Caco-2 (cell line): ENCODE measurements at regions of chr13 and their contacts with region 1.

Region 1: DNA sequence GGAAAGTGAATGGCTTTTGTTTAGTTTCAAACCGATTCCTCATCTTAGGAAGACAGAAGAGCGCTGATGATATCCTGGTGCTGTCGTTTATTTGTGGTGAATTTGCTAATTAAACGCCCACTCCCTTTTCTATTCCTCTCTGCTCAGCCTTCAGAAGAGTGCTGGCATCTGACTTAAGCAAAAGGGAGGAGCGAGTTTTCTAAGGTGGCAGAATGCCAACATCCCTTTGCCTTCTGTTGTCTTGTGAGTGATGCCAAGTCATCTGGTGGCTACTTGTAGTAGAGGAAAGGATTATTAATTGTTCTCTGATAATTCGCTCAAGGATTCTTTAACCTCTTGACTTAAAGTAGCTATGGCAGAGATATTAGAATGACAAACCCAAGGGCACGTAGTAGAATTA is 68.1 kb downstream of the ERCC5 start:
- DNase-seq: no peak
- H3K4me3 ChIP-seq: no peak overlapping the region
- H3K4me3 Mint-ChIP-seq: no peak overlapping the region
- H3K27ac Mint-ChIP-seq: no peak overlapping the region
- H3K4me1 ChIP-seq: peaks cover 8% of the 10 kb centered on the region; the same call in 1 of the 2 replicates
- H3K4me1 Mint-ChIP-seq: peaks cover 17% of the 10 kb centered on the region
- H3K27me3 ChIP-seq: no peaks in the 10 kb centered on the region
- H3K27me3 Mint-ChIP-seq: no peaks in the 10 kb centered on the region
- CTCF ChIP-seq: no peak

Region 2: GRCh38 chr13:102311901-102312300 is 602.0 kb before region 1 on chr13:
- CTCF ChIA-PET with region 1: no interaction called
- POLR2A ChIA-PET with region 1: no interaction called
- intact Hi-C with region 1: no loop called
- DNase-seq: no peak
- H3K4me3 ChIP-seq: no peak overlapping the region
- H3K4me3 Mint-ChIP-seq: no peak overlapping the region
- H3K27ac Mint-ChIP-seq: no peak overlapping the region
- H3K4me1 ChIP-seq: no peaks in the 10 kb centered on the region
- H3K4me1 Mint-ChIP-seq: no peaks in the 10 kb centered on the region
- H3K27me3 ChIP-seq: no peaks in the 10 kb centered on the region
- H3K27me3 Mint-ChIP-seq: peaks cover 15% of the 10 kb centered on the region
- CTCF ChIP-seq: no peak

Region 3: GRCh38 chr13:102870677-102871415 is 43.1 kb before region 1 on chr13:
- CTCF ChIA-PET with region 1: interaction called, 6 read pairs
- POLR2A ChIA-PET with region 1: no interaction called
- intact Hi-C with region 1: loop called (anchors 1 kb)
- DNase-seq: peak; percentile 70 to 76
- H3K4me3 ChIP-seq: no peak overlapping the region
- H3K4me3 Mint-ChIP-seq: no peak overlapping the region
- H3K27ac Mint-ChIP-seq: no peak overlapping the region
- H3K4me1 ChIP-seq: no peaks in the 10 kb centered on the region
- H3K4me1 Mint-ChIP-seq: no peaks in the 10 kb centered on the region
- H3K27me3 ChIP-seq: no peaks in the 10 kb centered on the region; the same call in 1 of the 2 replicates
- H3K27me3 Mint-ChIP-seq: no peaks in the 10 kb centered on the region
- CTCF ChIP-seq: peak; percentile 76 to 85

Region 4: GRCh38 chr13:102928941-102929675 is 15.2 kb after region 1 on chr13:
- CTCF ChIA-PET with region 1: no interaction called
- POLR2A ChIA-PET with region 1: no interaction called
- intact Hi-C with region 1: no loop called
- DNase-seq: no peak
- H3K4me3 ChIP-seq: no peak overlapping the region
- H3K4me3 Mint-ChIP-seq: no peak overlapping the region
- H3K27ac Mint-ChIP-seq: no peak overlapping the region
- H3K4me1 ChIP-seq: no peaks in the 10 kb centered on the region
- H3K4me1 Mint-ChIP-seq: no peaks in the 10 kb centered on the region
- H3K27me3 ChIP-seq: no peaks in the 10 kb centered on the region; the same call in 1 of the 2 replicates
- H3K27me3 Mint-ChIP-seq: no peaks in the 10 kb centered on the region
- CTCF ChIP-seq: no peak

Region 5: GRCh38 chr13:102947745-102948405 is 34.0 kb after region 1 on chr13:
- CTCF ChIA-PET with region 1: no interaction called
- POLR2A ChIA-PET with region 1: no interaction called
- intact Hi-C with region 1: no loop called
- DNase-seq: peak in 1 of 2 experiments; percentile 4
- H3K4me3 ChIP-seq: no peak overlapping the region
- H3K4me3 Mint-ChIP-seq: no peak overlapping the region
- H3K27ac Mint-ChIP-seq: no peak overlapping the region
- H3K4me1 ChIP-seq: no peaks in the 10 kb centered on the region
- H3K4me1 Mint-ChIP-seq: no peaks in the 10 kb centered on the region
- H3K27me3 ChIP-seq: no peaks in the 10 kb centered on the region
- H3K27me3 Mint-ChIP-seq: peaks cover 8% of the 10 kb centered on the region
- CTCF ChIP-seq: no peak

Region 6: GRCh38 chr13:103067751-103068555 is 154.0 kb after region 1 on chr13:
- CTCF ChIA-PET with region 1: no interaction called
- POLR2A ChIA-PET with region 1: no interaction called
- intact Hi-C with region 1: loop called (anchors 1 kb)
- DNase-seq: peak; percentile 40 to 59
- H3K4me3 ChIP-seq: no peak overlapping the region
- H3K4me3 Mint-ChIP-seq: no peak overlapping the region
- H3K27ac Mint-ChIP-seq: no peak overlapping the region
- H3K4me1 ChIP-seq: no peaks in the 10 kb centered on the region
- H3K4me1 Mint-ChIP-seq: no peaks in the 10 kb centered on the region
- H3K27me3 ChIP-seq: no peaks in the 10 kb centered on the region
- H3K27me3 Mint-ChIP-seq: peaks cover 3% of the 10 kb centered on the region
- CTCF ChIP-seq: peak in 1 of 2 experiments; percentile 34

Region 7: GRCh38 chr13:103140001-103140671 is 226.2 kb after region 1 on chr13:
- CTCF ChIA-PET with region 1: interaction called, 6 read pairs
- POLR2A ChIA-PET with region 1: no interaction called
- intact Hi-C with region 1: loop called (anchors 1 kb)
- DNase-seq: peak in 1 of 2 experiments; percentile 30
- H3K4me3 ChIP-seq: no peak overlapping the region
- H3K4me3 Mint-ChIP-seq: no peak overlapping the region
- H3K27ac Mint-ChIP-seq: no peak overlapping the region
- H3K4me1 ChIP-seq: no peaks in the 10 kb centered on the region
- H3K4me1 Mint-ChIP-seq: peaks cover 7% of the 10 kb centered on the region
- H3K27me3 ChIP-seq: no peaks in the 10 kb centered on the region
- H3K27me3 Mint-ChIP-seq: peaks cover 10% of the 10 kb centered on the region
- CTCF ChIP-seq: peak; percentile 51 to 61

Region 8: DNA sequence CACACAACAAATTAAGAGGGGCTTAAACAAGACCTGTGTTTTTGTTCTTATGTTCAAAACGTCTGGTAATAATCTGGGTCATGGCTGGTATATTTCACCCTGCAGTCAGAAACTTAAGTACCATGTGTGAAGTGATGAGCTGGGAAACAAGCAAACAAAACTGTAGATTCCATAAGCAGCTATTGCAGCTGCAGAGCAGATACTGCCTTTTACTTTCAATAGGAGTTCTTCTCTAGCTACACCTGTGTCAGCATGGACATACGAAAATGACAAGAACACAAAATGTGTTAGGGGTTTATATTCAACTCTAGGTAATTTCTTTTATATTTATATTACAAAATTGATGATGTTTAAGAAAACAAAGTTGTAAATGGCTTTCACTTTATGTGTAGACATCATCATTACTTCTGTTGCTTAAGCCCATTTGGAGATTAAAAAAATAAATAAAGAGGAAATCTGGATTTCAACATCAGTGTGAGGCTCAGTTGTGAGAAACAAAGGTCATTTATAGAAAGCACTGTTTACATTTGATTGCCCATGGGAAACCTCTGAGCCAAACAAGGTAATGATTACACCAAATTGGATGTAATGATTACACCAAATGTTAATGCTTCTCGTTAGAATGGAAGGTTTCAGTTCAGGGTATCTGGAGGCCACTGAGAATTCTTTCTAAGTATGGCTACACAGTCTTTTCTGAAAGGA is 603.3 kb after region 1 on chr13:
- CTCF ChIA-PET with region 1: no interaction called
- POLR2A ChIA-PET with region 1: no interaction called
- intact Hi-C with region 1: loop called (anchors 10 kb)
- DNase-seq: peak in 1 of 2 experiments; percentile 5
- H3K4me3 ChIP-seq: no peak overlapping the region
- H3K4me3 Mint-ChIP-seq: peak overlapping the region; percentile 3
- H3K27ac Mint-ChIP-seq: no peak overlapping the region
- H3K4me1 ChIP-seq: no peaks in the 10 kb centered on the region; the same call in 1 of the 2 replicates
- H3K4me1 Mint-ChIP-seq: no peaks in the 10 kb centered on the region
- H3K27me3 ChIP-seq: no peaks in the 10 kb centered on the region
- H3K27me3 Mint-ChIP-seq: no peaks in the 10 kb centered on the region
- CTCF ChIP-seq: no peak

Region 9: GRCh38 chr13:104114101-104114500 is 1200.2 kb after region 1 on chr13:
- CTCF ChIA-PET with region 1: no interaction called
- POLR2A ChIA-PET with region 1: no interaction called
- intact Hi-C with region 1: no loop called
- DNase-seq: no peak
- H3K4me3 ChIP-seq: no peak overlapping the region
- H3K4me3 Mint-ChIP-seq: no peak overlapping the region
- H3K27ac Mint-ChIP-seq: no peak overlapping the region
- H3K4me1 ChIP-seq: no peaks in the 10 kb centered on the region
- H3K4me1 Mint-ChIP-seq: no peaks in the 10 kb centered on the region
- H3K27me3 ChIP-seq: no peaks in the 10 kb centered on the region
- H3K27me3 Mint-ChIP-seq: no peaks in the 10 kb centered on the region
- CTCF ChIP-seq: no peak